GM18951 (cell line): ENCODE measurements at regions of chr14 and their contacts with region 1.

Region 1: GRCh38 chr14:105709281-105710118 is 183.1 kb downstream of the TMEM121 start:
- POLR2A ChIP-seq: no peak

Region 2: DNA sequence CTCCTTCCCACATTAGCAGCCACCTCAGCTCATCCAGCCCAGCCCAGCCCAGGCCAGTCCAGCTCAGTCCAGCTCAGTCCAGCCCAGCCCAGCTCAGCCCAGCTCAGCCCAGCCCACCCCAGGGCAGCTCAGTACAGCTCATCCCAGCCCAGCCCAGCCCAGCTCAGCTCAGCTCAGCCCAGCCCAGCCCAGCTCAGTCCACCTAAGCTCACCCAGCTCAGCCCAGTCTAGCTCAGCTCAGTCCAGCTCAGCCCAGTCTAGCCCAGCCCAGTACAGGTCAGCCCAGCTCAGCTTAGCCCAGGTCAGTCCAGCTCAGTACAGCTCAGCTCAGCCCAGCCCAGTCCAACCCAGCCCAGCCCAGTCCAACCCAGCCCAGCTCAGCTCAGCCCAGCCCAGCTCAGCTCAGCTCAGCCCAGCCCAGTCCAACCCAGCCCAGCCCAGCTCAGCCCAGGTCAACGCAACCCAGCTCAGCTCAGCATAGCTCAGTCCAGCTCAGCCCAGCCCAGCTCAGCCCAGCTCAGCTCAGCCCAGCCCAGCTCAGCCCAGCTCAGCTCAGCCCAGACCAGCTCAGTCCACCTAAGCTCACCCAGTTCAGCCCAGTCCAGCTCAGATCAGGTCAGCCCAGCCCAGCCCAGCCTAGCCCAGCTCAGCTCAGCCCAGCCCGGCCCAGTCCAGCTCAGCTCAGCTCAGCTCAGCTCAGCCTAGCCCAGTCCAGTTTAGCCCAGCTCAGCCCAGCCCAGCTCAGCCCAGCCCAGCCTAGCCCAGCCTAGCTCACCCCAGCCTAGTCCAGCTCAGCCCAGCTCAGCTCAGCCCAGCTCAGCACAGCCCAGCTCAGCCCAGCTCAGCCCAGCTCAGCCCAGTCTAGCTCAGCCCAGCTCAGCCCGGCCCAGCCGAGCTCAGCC is 120.1 kb before region 1 on chr14:
- in situ Hi-C with region 1: loop called (anchors 5 kb)
- POLR2A ChIP-seq: no peak

Region 3: GRCh38 chr14:105765893-105766614 is 56.6 kb after region 1 on chr14:
- in situ Hi-C with region 1: no loop called
- POLR2A ChIP-seq: no peak